CD8-positive, alpha-beta T cell (primary cell): ENCODE measurements at regions of chrX and their contacts with region 1.

Region 1: GRCh38 chrX:51461053-51462044 is 35.0 kb downstream of the NUDT11 start:
- DNase-seq: peak in 3 of 9 experiments; percentile 23 to 59 (median 48)
- ATAC-seq: no peak
- H3K4me3 ChIP-seq: no peak overlapping the region
- H3K4me3 Mint-ChIP-seq: no peak overlapping the region
- H3K27ac ChIP-seq: no peak overlapping the region
- H3K27ac Mint-ChIP-seq: no peak overlapping the region
- H3K4me1 ChIP-seq: no peaks in the 10 kb centered on the region
- H3K4me1 Mint-ChIP-seq: no peaks in the 10 kb centered on the region
- H3K27me3 ChIP-seq: no peaks in the 10 kb centered on the region
- H3K27me3 Mint-ChIP-seq: no peaks in the 10 kb centered on the region
- CTCF ChIP-seq: peak; percentile 72

Region 2: DNA sequence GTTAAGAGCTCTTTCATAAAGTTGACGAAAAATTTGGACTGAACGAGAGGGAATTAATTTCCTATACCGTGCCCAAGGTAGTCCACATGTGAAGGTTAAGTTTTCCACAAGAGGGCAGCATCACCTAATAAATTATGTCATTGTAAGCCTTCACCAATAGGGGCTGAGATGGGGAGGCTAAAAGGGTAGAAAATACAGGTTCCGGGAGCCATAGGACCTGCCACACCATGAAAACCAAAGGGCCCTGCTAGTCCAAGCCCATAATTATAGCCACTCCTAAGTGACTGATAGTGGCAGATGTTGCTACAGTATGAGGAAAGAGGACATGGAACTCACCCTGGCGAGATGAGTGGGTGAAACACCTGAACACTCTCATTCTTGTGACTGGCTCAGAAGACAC is 769.5 kb before region 1 on chrX:
- CTCF ChIA-PET with region 1: interaction called, 3 read pairs
- POLR2A ChIA-PET with region 1: no interaction called
- intact Hi-C with region 1: loop called (anchors 2 to 5 kb)
- DNase-seq: peak in 4 of 9 experiments; percentile 7 to 47 (median 21)
- ATAC-seq: peak; percentile 36
- H3K4me3 ChIP-seq: no peak overlapping the region
- H3K4me3 Mint-ChIP-seq: no peak overlapping the region
- H3K27ac ChIP-seq: no peak overlapping the region
- H3K27ac Mint-ChIP-seq: no peak overlapping the region
- H3K4me1 ChIP-seq: no peaks in the 10 kb centered on the region
- H3K4me1 Mint-ChIP-seq: no peaks in the 10 kb centered on the region
- H3K27me3 ChIP-seq: no peaks in the 10 kb centered on the region
- H3K27me3 Mint-ChIP-seq: peaks cover 11% of the 10 kb centered on the region
- CTCF ChIP-seq: peak; percentile 30

Region 3: GRCh38 chrX:51144852-51145442 is 316.4 kb before region 1 on chrX:
- CTCF ChIA-PET with region 1: interaction called, 3 read pairs
- POLR2A ChIA-PET with region 1: no interaction called
- intact Hi-C with region 1: loop called (anchors 1 to 2 kb)
- DNase-seq: peak in 4 of 9 experiments; percentile 12 to 34 (median 26)
- ATAC-seq: no peak
- H3K4me3 ChIP-seq: no peak overlapping the region
- H3K4me3 Mint-ChIP-seq: no peak overlapping the region
- H3K27ac ChIP-seq: no peak overlapping the region
- H3K27ac Mint-ChIP-seq: no peak overlapping the region
- H3K4me1 ChIP-seq: no peaks in the 10 kb centered on the region
- H3K4me1 Mint-ChIP-seq: no peaks in the 10 kb centered on the region
- H3K27me3 ChIP-seq: no peaks in the 10 kb centered on the region
- H3K27me3 Mint-ChIP-seq: peaks cover 7% of the 10 kb centered on the region
- CTCF ChIP-seq: peak; percentile 27

Region 4: GRCh38 chrX:51336584-51336983 is 124.8 kb before region 1 on chrX:
- CTCF ChIA-PET with region 1: interaction called, 51 read pairs
- POLR2A ChIA-PET with region 1: no interaction called
- intact Hi-C with region 1: loop called in 1 of 2 experiments (anchors 1 kb)
- DNase-seq: peak in 5 of 9 experiments; percentile 11 to 57 (median 36)
- ATAC-seq: peak; percentile 80
- H3K4me3 ChIP-seq: no peak overlapping the region
- H3K4me3 Mint-ChIP-seq: no peak overlapping the region
- H3K27ac ChIP-seq: no peak overlapping the region
- H3K27ac Mint-ChIP-seq: no peak overlapping the region
- H3K4me1 ChIP-seq: no peaks in the 10 kb centered on the region
- H3K4me1 Mint-ChIP-seq: peaks cover 7% of the 10 kb centered on the region
- H3K27me3 ChIP-seq: no peaks in the 10 kb centered on the region
- H3K27me3 Mint-ChIP-seq: no peaks in the 10 kb centered on the region
- CTCF ChIP-seq: peak; percentile 48